Dendritic cell treated with granulocyte-macrophage colony-stimulating factor and Interleukin-4, amounts not matched to agents 40 ng/mL and 50 ng/mL, for 4 days (primary cell): ENCODE measurements at regions of chr7 and their contacts with region 1.

Region 1: GRCh38 chr7:95511716-95512260 is 26.0 kb downstream of the ASB4 start:
- H3K4me3 Mint-ChIP-seq: no peak overlapping the region
- H3K27ac Mint-ChIP-seq: no peak overlapping the region
- H3K4me1 Mint-ChIP-seq: no peaks in the 10 kb centered on the region
- H3K27me3 Mint-ChIP-seq: no peaks in the 10 kb centered on the region

Region 2: DNA sequence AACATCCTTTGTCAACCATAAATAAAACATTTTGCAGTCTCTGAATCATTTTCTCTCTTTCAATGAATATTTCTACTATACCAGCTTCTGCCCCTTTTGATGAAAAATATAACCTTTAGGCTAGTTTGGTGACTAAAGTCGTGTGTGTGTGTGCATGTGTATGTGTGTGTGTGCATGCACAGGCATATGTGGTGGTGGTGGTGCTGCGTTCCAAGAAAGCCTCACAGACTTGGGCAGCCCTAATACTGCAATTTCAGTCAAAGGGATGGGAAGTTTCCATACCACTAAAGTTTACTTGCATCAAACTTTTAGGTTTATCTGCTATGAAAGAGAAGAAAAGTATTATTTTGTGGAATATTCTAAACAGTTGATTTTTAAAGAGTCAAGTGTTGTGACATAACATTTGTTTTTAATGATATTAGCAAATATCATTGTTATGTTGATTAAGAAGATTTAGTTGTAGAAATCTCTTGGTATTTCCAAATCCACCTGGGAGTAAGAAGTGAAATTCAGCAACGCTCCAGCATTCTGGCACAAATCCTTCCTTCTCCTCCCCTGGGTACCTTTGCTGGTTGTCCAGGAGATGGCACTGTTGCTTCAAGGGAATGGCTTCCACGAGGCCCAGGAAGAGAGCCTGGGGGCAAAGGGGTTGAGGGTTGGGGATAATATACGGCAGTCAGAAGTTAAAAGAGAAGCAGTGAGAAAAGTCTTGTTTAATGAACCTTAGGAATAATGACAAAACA is 15.4 kb after region 1 on chr7:
- intact Hi-C with region 1: loop called (anchors 2 kb)
- H3K4me3 Mint-ChIP-seq: no peak overlapping the region
- H3K27ac Mint-ChIP-seq: no peak overlapping the region
- H3K4me1 Mint-ChIP-seq: peaks cover 5% of the 10 kb centered on the region
- H3K27me3 Mint-ChIP-seq: no peaks in the 10 kb centered on the region

Region 3: GRCh38 chr7:95553939-95554338 is 42.2 kb after region 1 on chr7:
- intact Hi-C with region 1: no loop called
- H3K4me3 Mint-ChIP-seq: no peak overlapping the region
- H3K27ac Mint-ChIP-seq: no peak overlapping the region
- H3K4me1 Mint-ChIP-seq: peaks cover 18% of the 10 kb centered on the region
- H3K27me3 Mint-ChIP-seq: no peaks in the 10 kb centered on the region

Region 4: GRCh38 chr7:95690367-95690947 is 178.7 kb after region 1 on chr7:
- intact Hi-C with region 1: loop called (anchors 1 kb)
- H3K4me3 Mint-ChIP-seq: no peak overlapping the region
- H3K27ac Mint-ChIP-seq: no peak overlapping the region
- H3K4me1 Mint-ChIP-seq: no peaks in the 10 kb centered on the region
- H3K27me3 Mint-ChIP-seq: no peaks in the 10 kb centered on the region